ENCODE measurements at regions of chr7 and their contacts with region 1.

Region 1: GRCh38 chr7:81111358-81111757 is 192.5 kb upstream of the SEMA3C start:
- DNase-seq: no peak
- ATAC-seq: no peak
- H3K4me3 ChIP-seq: no peak overlapping the region
- H3K27ac ChIP-seq: no peak overlapping the region
- H3K4me1 ChIP-seq: no peaks in the 10 kb centered on the region
- H3K27me3 ChIP-seq: no peaks in the 10 kb centered on the region
- CTCF ChIP-seq: no peak
- EP300 ChIP-seq: no peak
- POLR2A ChIP-seq: no peak
- RAD21 ChIP-seq: no peak

Region 2: GRCh38 chr7:81195033-81195432 is 83.7 kb after region 1 on chr7:
- CTCF ChIA-PET with region 1: no interaction called
- POLR2A ChIA-PET with region 1: no interaction called
- in situ Hi-C with region 1: no loop called
- intact Hi-C with region 1: loop called (anchors 5 kb)
- DNase-seq: peak; percentile 3
- ATAC-seq: 0 out of 3 replicates have a peak, but pooled peaks have one; percentile 43
- H3K4me3 ChIP-seq: no peak overlapping the region
- H3K27ac ChIP-seq: no peak overlapping the region
- H3K4me1 ChIP-seq: 0 out of 2 replicates have a peak, but pooled peaks cover 6% of the 10 kb centered on the region
- H3K27me3 ChIP-seq: no peaks in the 10 kb centered on the region
- CTCF ChIP-seq: no peak
- EP300 ChIP-seq: no peak
- POLR2A ChIP-seq: no peak
- RAD21 ChIP-seq: no peak

Measured in HepG2 (cell line).